ENCODE measurements at regions of chr14 and their contacts with region 1.

Region 1: GRCh38 chr14:24093901-24094761 is at the start of gene PCK2:
- DNase-seq: peak; percentile 99
- ATAC-seq: peak; percentile 86
- H3K4me3 ChIP-seq: peak within 1 kb of the TSS; percentile 86 to 98 (median 97)
- H3K27ac ChIP-seq: peak within 1 kb of the TSS; percentile 87
- H3K4me1 ChIP-seq: peaks cover 62% of the 10 kb centered on the region
- H3K27me3 ChIP-seq: peaks cover 0 to 6% of the 10 kb centered on the region in 2 experiments; a peak in 1 of 5 replicates
- CTCF ChIP-seq: peak; percentile 66
- EP300 ChIP-seq: peak; percentile 23 to 86; a peak in 3 of 4 replicates
- POLR2A ChIP-seq: peak in 1 of 2 experiments; percentile 98; a peak in 2 of 4 replicates
- RAD21 ChIP-seq: peak; percentile 83
- total RNA-seq, gene PCK2: 118 and 129 TPM in 2 replicates

Region 2: GRCh38 chr14:23095196-23096108 is 998.7 kb before region 1 on chr14 and contains the start of gene C14orf119:
- CTCF ChIA-PET with region 1: no interaction called
- POLR2A ChIA-PET with region 1: interaction called, 33 read pairs
- in situ Hi-C with region 1: no loop called
- intact Hi-C with region 1: no loop called
- DNase-seq: peak; percentile 100
- ATAC-seq: peak; percentile 92
- H3K4me3 ChIP-seq: peak within 1 kb of the TSS; percentile 71 to 96 (median 95)
- H3K27ac ChIP-seq: peak within 1 kb of the TSS; percentile 89
- H3K4me1 ChIP-seq: peaks cover 37% of the 10 kb centered on the region
- H3K27me3 ChIP-seq: no peaks in the 10 kb centered on the region; a peak in 1 of 5 replicates
- CTCF ChIP-seq: peak; percentile 16; the same call in 1 of the 2 replicates
- EP300 ChIP-seq: no peak; a peak in 2 of 4 replicates
- POLR2A ChIP-seq: peak in 1 of 2 experiments; percentile 55; a peak in 2 of 4 replicates
- RAD21 ChIP-seq: peak; percentile 42; the same call in 1 of the 2 replicates
- total RNA-seq, gene C14orf119: 206 and 299 TPM in 2 replicates

Region 3: GRCh38 chr14:23984891-23985602 is 109.1 kb before region 1 on chr14:
- CTCF ChIA-PET with region 1: no interaction called
- POLR2A ChIA-PET with region 1: interaction called, 14 read pairs
- in situ Hi-C with region 1: no loop called
- intact Hi-C with region 1: loop called (anchors 5 kb)
- DNase-seq: peak; percentile 36
- ATAC-seq: no peak
- H3K4me3 ChIP-seq: no peak overlapping the region
- H3K27ac ChIP-seq: no peak overlapping the region
- H3K4me1 ChIP-seq: peaks cover 82% of the 10 kb centered on the region
- H3K27me3 ChIP-seq: no peaks in the 10 kb centered on the region
- CTCF ChIP-seq: no peak
- EP300 ChIP-seq: no peak
- POLR2A ChIP-seq: no peak
- RAD21 ChIP-seq: no peak

Region 4: GRCh38 chr14:24075485-24076301 is 18.4 kb before region 1 on chr14:
- CTCF ChIA-PET with region 1: interaction called, 3 read pairs
- POLR2A ChIA-PET with region 1: interaction called, 131 read pairs
- in situ Hi-C with region 1: no loop called
- intact Hi-C with region 1: no loop called
- DNase-seq: no peak
- ATAC-seq: peak; percentile 1; the same call in 1 of the 3 replicates
- H3K4me3 ChIP-seq: no peak overlapping the region
- H3K27ac ChIP-seq: no peak overlapping the region
- H3K4me1 ChIP-seq: peaks cover 33% of the 10 kb centered on the region
- H3K27me3 ChIP-seq: peaks cover 15 to 66% of the 10 kb centered on the region in 2 experiments
- CTCF ChIP-seq: no peak
- EP300 ChIP-seq: no peak
- POLR2A ChIP-seq: no peak
- RAD21 ChIP-seq: no peak

Region 5: GRCh38 chr14:24135834-24136542 is 41.9 kb after region 1 on chr14 and contains the start of gene PSME1:
- CTCF ChIA-PET with region 1: no interaction called
- POLR2A ChIA-PET with region 1: interaction called, 258 read pairs
- in situ Hi-C with region 1: no loop called
- intact Hi-C with region 1: loop called (anchors 1 kb)
- DNase-seq: peak; percentile 93
- ATAC-seq: peak; percentile 86
- H3K4me3 ChIP-seq: peak within 1 kb of the TSS; percentile 91 to 98 (median 93)
- H3K27ac ChIP-seq: peak within 1 kb of the TSS; percentile 75
- H3K4me1 ChIP-seq: peaks cover 64% of the 10 kb centered on the region
- H3K27me3 ChIP-seq: no peaks in the 10 kb centered on the region; a peak in 1 of 5 replicates
- CTCF ChIP-seq: peak; percentile 47; the same call in 1 of the 2 replicates
- EP300 ChIP-seq: peak; percentile 23 to 43; a peak in 1 of 4 replicates
- POLR2A ChIP-seq: peak in 1 of 2 experiments; percentile 31; a peak in 1 of 4 replicates
- RAD21 ChIP-seq: peak; percentile 71
- total RNA-seq, gene PSME1: 608 and 713 TPM in 2 replicates

Region 6: DNA sequence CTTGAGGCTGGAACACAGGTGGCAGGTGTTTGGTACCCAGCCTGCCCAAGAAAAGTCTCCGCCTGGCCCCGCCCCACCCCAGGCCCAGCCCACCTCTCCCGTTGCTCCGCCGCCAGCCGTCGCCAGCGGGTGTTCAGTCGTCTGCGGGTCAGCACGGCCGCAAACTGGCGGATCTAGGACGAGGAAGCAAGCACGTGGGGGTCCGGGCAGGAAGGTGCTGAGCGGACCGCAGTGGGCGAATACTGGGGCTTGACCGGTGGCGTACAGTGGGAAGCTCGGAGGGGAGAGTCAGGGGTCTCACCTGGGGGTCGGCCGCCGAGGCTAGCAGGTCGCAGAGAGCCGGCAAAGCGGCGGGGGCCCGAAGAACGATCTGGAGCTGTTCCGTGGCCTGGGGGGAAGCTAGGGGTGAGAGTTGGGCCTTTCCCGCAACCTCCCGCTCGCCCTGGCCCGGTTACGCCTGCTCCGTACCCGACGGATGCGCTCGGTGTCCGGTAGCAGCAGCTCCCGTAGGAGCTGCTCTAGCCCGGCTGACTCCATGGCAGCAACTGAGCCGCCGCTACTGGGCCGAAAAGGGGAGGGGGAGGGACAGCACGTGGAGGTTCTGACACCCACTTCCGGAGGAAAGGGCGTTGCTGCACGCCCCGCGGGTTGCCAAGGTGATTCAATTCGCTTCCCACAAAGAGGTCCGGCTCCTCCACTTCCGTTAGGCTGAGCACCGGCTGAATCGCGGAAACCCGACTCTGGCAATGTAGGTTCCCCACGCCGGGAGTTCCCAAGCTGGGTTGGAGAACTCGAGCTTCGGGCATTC is 94.3 kb after region 1 on chr14 and contains the start of gene IPO4:
- CTCF ChIA-PET with region 1: no interaction called
- POLR2A ChIA-PET with region 1: interaction called, 22 read pairs
- in situ Hi-C with region 1: no loop called
- intact Hi-C with region 1: no loop called
- DNase-seq: peak; percentile 100
- ATAC-seq: peak; percentile 88
- H3K4me3 ChIP-seq: peak within 1 kb of the TSS; percentile 70 to 92 (median 77)
- H3K27ac ChIP-seq: peak within 1 kb of the TSS; percentile 64
- H3K4me1 ChIP-seq: peaks cover 42% of the 10 kb centered on the region
- H3K27me3 ChIP-seq: no peaks in the 10 kb centered on the region
- CTCF ChIP-seq: peak; percentile 49
- EP300 ChIP-seq: peak; percentile 85 to 87; a peak in 3 of 4 replicates
- POLR2A ChIP-seq: peak in 1 of 2 experiments; percentile 98; a peak in 2 of 4 replicates
- RAD21 ChIP-seq: peak; percentile 77
- total RNA-seq, gene IPO4: 149 and 179 TPM in 2 replicates

Region 7: GRCh38 chr14:24299255-24300195 is 205.4 kb after region 1 on chr14 and contains the starts of genes DHRS1 and NOP9:
- CTCF ChIA-PET with region 1: no interaction called
- POLR2A ChIA-PET with region 1: interaction called, 19 read pairs
- in situ Hi-C with region 1: no loop called
- intact Hi-C with region 1: no loop called
- DNase-seq: peak; percentile 93
- ATAC-seq: peak; percentile 80
- H3K4me3 ChIP-seq: peak within 1 kb of the TSS; percentile 79 to 98 (median 89)
- H3K27ac ChIP-seq: peak within 1 kb of the TSS; percentile 83
- H3K4me1 ChIP-seq: peaks cover 45% of the 10 kb centered on the region
- H3K27me3 ChIP-seq: no peaks in the 10 kb centered on the region; a peak in 1 of 5 replicates
- CTCF ChIP-seq: peak; percentile 53
- EP300 ChIP-seq: peak; percentile 63 to 81; a peak in 3 of 4 replicates
- POLR2A ChIP-seq: peak in 1 of 2 experiments; percentile 88; a peak in 2 of 4 replicates
- RAD21 ChIP-seq: peak; percentile 54; the same call in 1 of the 2 replicates
- total RNA-seq, gene DHRS1: 46.3 and 60.8 TPM in 2 replicates
- total RNA-seq, gene NOP9: 61.6 and 64.5 TPM in 2 replicates